Heart right ventricle (tissue), 16 donors: ENCODE measurements at regions of chr4 and their contacts with region 1.

Region 1: GRCh38 chr4:52659001-52659721 is at the start of gene USP46:
- DNase-seq: peak; percentile 81 to 84
- ATAC-seq: peak; percentile 77 to 96 (median 92)
- H3K4me3 ChIP-seq: peak within 1 kb of the TSS; percentile 51 to 93 (median 85)
- H3K27ac ChIP-seq: peak within 1 kb of the TSS; percentile 95 to 100 (median 98)
- H3K4me1 ChIP-seq: peaks cover 0 to 71% (median 47%) of the 10 kb centered on the region in 9 donors
- H3K27me3 ChIP-seq: no peaks in the 10 kb centered on the region
- CTCF ChIP-seq: no peak
- total RNA-seq, gene USP46: 46.8 to 113 (median 74.8) TPM

Region 2: GRCh38 chr4:52376132-52376704 is 282.9 kb before region 1 on chr4:
- intact Hi-C with region 1: loop called in 1 of 10 experiments (anchors 10 kb)
- DNase-seq: peak in 1 of 2 donors; percentile 38
- ATAC-seq: peak in 1 of 8 donors; percentile 21
- H3K4me3 ChIP-seq: no peak overlapping the region
- H3K27ac ChIP-seq: no peak overlapping the region
- H3K4me1 ChIP-seq: peaks cover 0 to 9% (median 0%) of the 10 kb centered on the region in 9 donors
- H3K27me3 ChIP-seq: peaks cover 0 to 6% (median 0%) of the 10 kb centered on the region in 7 donors
- CTCF ChIP-seq: peak; percentile 51 to 71 (median 62)

Region 3: DNA sequence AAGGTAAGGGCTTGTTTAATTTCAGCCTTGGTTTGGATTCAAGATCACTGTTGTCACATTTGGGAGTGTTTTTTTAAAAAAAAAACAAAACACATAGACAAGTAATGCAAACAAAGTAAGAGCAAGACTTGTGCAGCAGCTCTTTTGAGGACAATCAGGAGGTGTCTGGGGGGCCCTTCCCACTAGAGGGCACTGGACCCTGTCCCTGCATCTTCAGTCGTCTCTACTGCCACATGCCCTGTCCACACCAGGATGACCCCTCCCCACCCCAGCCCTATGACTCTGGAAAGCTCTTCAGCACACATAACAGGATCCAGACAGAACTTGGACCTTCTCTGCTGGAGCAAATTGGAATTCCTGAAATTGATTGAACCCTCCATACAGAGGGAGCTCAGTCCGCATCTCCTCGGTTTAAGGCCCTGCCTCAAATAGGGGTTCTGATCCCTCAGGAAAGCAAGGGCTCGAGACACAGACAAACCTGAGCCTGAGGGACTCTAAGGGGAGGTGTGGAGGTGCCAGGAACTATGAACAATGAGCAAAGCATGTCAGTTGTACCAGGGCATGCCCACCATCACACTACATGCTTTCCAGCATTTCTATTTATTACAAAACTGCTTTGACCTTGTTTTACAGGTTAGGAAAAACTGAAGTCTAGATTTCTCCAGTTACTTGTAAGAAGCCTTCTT is 70.9 kb before region 1 on chr4:
- intact Hi-C with region 1: loop called in 4 of 10 experiments (anchors 2 to 5 kb)
- DNase-seq: peak; percentile 24 to 51
- ATAC-seq: peak; percentile 23 to 70 (median 64)
- H3K4me3 ChIP-seq: no peak overlapping the region
- H3K27ac ChIP-seq: peak overlapping the region in 8 of 10 donors; percentile 31 to 90 (median 86)
- H3K4me1 ChIP-seq: peaks cover 0 to 44% (median 16%) of the 10 kb centered on the region in 9 donors
- H3K27me3 ChIP-seq: no peaks in the 10 kb centered on the region
- CTCF ChIP-seq: peak; percentile 24 to 67 (median 59)

Region 4: DNA sequence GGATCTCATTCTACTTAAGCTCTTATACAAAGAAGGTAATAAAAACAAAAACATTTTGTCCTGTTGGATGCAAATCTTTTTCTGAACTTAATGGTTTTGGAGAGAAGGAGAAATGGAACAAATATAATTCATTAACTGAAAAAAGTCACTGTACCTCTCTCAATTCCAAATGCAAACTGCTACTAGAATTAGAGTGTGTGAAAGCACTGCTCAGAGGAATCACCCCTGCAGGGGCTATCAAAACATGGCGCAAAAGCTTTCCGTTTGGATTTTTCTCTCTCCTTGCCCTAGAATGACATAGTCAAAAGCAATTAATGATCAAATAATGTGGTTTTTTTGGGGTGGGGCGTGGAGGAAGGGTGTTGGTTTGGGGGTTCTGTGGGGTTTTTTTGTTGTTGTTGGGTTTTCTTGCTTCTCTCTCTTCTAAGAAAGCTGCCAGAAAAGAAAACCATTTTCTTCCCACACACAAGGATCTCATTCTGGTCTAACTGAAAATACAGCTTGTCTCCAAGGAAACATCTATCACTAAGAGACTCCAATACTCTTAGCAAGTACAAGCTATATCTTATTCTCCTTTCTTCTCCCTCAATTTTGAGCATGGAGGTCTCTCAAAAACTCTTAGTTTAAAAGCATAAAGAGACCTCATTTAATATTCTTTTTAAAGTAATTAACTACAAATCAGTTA is 41.7 kb before region 1 on chr4:
- intact Hi-C with region 1: no loop called
- DNase-seq: no peak
- ATAC-seq: no peak
- H3K4me3 ChIP-seq: no peak overlapping the region
- H3K27ac ChIP-seq: no peak overlapping the region
- H3K4me1 ChIP-seq: peaks cover 0 to 36% (median 19%) of the 10 kb centered on the region in 9 donors
- H3K27me3 ChIP-seq: no peaks in the 10 kb centered on the region
- CTCF ChIP-seq: no peak

Region 5: GRCh38 chr4:52704661-52705060 is 45.5 kb after region 1 on chr4:
- intact Hi-C with region 1: loop called in 1 of 10 experiments (anchors 5 kb)
- DNase-seq: peak in 1 of 2 donors; percentile 37
- ATAC-seq: no peak
- H3K4me3 ChIP-seq: no peak overlapping the region
- H3K27ac ChIP-seq: no peak overlapping the region
- H3K4me1 ChIP-seq: no peaks in the 10 kb centered on the region
- H3K27me3 ChIP-seq: no peaks in the 10 kb centered on the region
- CTCF ChIP-seq: no peak

Region 6: DNA sequence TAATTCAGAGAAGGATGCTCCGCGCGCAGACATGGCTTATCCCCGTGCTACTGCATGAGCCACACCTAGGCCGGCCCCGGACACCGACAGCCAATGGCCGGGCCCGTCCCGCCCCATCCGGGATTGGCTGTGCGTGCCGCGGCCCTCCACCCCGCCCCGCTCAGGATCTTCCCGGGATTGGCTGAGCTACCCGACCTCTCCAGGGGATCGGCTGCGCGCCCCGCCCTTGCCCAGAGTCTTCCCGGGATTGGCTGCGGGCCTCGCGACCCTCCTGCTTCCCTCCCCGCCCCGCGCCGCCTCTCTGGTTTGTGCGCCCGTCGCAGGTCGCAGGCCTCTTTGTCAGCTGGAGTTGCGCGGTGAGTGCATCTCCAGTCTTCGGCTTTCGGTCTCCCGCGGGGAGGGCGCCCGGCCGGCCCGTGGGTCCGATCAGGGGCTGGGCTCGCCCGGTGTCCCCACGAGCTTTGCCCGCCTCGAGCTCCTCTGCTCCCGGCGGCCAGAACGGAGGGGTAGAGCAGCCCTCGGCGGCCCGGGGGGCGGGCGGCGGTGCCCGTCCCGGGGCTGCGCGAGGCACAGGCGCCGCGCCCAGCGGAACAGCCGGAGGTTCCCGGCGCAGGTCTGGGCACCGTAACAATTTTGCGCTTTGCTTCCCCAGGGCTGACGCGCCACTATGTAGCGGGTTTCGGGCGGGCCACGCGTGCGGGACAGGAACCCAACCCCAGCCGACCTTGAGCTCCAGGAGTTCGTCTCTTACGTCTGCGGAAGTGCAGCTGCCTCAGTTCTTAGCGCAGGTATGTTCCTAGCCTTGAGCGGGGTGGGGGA is 53.2 kb after region 1 on chr4:
- intact Hi-C with region 1: loop called in 7 of 10 experiments (anchors 2 to 5 kb)
- DNase-seq: peak; percentile 98 to 99
- ATAC-seq: peak; percentile 98 to 100 (median 99)
- H3K4me3 ChIP-seq: peak overlapping the region; percentile 77 to 97 (median 88)
- H3K27ac ChIP-seq: peak overlapping the region; percentile 91 to 100 (median 96)
- H3K4me1 ChIP-seq: peaks cover 0 to 41% (median 29%) of the 10 kb centered on the region in 9 donors
- H3K27me3 ChIP-seq: no peaks in the 10 kb centered on the region
- CTCF ChIP-seq: no peak

Region 7: DNA sequence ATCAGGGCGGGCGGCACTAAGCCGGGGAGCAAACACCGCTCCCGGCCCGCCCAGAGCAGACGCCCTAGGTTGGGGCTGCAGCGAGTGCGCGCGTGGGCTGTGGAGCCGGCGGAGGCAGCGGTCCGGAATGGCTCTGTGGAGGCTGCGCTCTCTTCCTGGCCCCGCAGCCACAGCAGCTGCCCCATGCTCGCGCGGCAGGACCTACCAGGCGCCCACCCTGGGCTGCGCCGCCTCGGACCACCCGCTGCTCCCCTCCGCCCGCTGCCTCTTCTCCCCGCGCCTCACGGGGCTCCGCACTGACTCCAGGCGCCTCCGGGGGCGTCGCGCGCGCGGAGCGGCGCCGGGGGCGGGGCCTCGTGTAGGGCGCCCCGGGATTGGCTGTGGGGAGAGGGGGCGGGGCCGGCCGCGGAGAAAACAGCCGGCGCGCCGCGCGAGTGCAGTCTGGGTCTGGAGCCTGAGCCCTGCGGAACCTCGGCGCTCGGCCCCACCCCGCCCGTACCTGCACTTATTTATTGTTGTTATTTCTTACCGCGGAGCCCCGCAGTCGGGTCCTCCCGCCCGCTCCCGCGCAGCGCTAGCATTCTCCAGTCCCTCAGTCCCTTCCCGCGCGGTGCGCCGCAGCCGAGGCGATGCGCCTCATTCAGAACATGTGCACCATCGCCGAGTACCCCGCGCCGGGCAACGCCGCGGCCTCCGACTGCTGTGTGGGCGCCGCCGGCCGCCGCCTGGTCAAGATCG is 202.9 kb after region 1 on chr4 and contains the start of gene RASL11B:
- intact Hi-C with region 1: loop called in 2 of 10 experiments (anchors 10 kb)
- DNase-seq: peak; percentile 82 to 89
- ATAC-seq: peak; percentile 97 to 99 (median 98)
- H3K4me3 ChIP-seq: peak within 1 kb of the TSS; percentile 45 to 90 (median 70)
- H3K27ac ChIP-seq: peak within 1 kb of the TSS; percentile 5 to 90 (median 74)
- H3K4me1 ChIP-seq: peaks cover 0 to 56% (median 34%) of the 10 kb centered on the region in 9 donors
- H3K27me3 ChIP-seq: peaks cover 0 to 31% (median 0%) of the 10 kb centered on the region in 7 donors
- CTCF ChIP-seq: peak in 7 of 9 donors; percentile 20 to 56 (median 42)
- total RNA-seq, gene RASL11B: 1.2 to 16.5 (median 6.1) TPM